ENCODE measurements at regions of chr10 and their contacts with region 1.

Region 1: GRCh38 chr10:119341459-119342301 is 134.3 kb downstream of the GRK5 start:
- DNase-seq: peak; percentile 73 to 84
- ATAC-seq: peak; percentile 77 to 90 (median 84)
- H3K4me3 ChIP-seq: no peak overlapping the region
- H3K27ac ChIP-seq: peak overlapping the region; percentile 50 to 84 (median 70)
- H3K4me1 ChIP-seq: peaks cover 23 to 87% (median 49%) of the 10 kb centered on the region in 9 donors
- H3K27me3 ChIP-seq: no peaks in the 10 kb centered on the region
- CTCF ChIP-seq: no peak

Region 2: DNA sequence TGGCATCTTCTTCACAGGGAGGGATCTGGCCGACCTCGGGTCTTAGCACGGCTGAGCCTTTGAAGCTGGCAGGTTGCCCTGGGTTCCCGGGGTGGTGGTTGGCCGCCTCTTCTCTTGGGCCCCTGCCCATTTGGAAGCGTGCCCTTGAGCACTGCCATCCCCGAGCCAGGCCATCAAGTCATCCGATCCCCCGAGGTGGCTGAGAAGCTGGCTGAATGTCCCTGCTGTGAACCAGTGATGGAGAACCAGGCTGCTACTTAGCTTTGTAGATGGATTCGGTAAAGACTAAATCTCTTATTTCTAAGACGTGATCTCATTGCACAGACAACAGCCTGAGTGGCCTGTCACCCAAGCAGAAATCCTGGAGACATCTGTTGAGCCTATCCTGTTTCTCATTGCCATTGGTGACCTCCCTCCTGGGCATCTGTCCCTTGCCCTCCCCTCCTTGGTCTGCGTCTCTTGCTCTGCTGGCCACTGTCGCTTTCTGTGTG is 60.1 kb before region 1 on chr10:
- intact Hi-C with region 1: loop called in 2 of 10 experiments (anchors 5 kb)
- DNase-seq: peak; percentile 88 to 91
- ATAC-seq: peak; percentile 32 to 84 (median 67)
- H3K4me3 ChIP-seq: no peak overlapping the region
- H3K27ac ChIP-seq: peak overlapping the region; percentile 18 to 70 (median 58)
- H3K4me1 ChIP-seq: peaks cover 48 to 99% (median 73%) of the 10 kb centered on the region in 9 donors
- H3K27me3 ChIP-seq: no peaks in the 10 kb centered on the region
- CTCF ChIP-seq: no peak

Region 3: DNA sequence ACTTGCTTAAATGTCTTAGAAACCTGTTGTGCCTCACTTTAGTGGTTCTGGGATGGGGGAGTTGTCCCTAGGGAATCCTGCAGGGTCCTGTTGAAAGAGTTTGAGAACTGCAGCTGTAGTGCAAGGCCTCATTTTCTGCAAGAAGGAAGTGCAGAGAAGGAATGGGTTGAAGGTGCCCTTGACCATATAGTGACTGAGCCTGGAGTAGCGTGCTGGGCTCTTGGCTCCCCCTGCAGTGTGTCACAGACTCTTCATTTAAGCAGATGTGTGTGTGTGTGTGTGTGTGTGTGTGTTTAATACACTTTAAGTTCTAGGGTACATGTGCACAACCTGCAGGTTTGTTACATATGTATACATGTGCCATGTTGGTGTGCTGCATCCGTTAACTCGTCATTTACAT is 42.1 kb before region 1 on chr10:
- intact Hi-C with region 1: loop called in 1 of 10 experiments (anchors 5 kb)
- DNase-seq: no peak
- ATAC-seq: no peak
- H3K4me3 ChIP-seq: no peak overlapping the region
- H3K27ac ChIP-seq: peak overlapping the region in 2 of 10 donors; percentile 4 to 54
- H3K4me1 ChIP-seq: peaks cover 21 to 80% (median 52%) of the 10 kb centered on the region in 9 donors
- H3K27me3 ChIP-seq: no peaks in the 10 kb centered on the region
- CTCF ChIP-seq: peak in 1 of 9 donors; percentile 28

Region 4: GRCh38 chr10:119421887-119422681 is 80.4 kb after region 1 on chr10:
- intact Hi-C with region 1: loop called in 1 of 10 experiments (anchors 5 kb)
- DNase-seq: peak in 1 of 2 donors; percentile 56
- ATAC-seq: peak in 6 of 8 donors; percentile 31 to 64 (median 38)
- H3K4me3 ChIP-seq: no peak overlapping the region
- H3K27ac ChIP-seq: peak overlapping the region in 9 of 10 donors; percentile 37 to 74 (median 68)
- H3K4me1 ChIP-seq: peaks cover 3 to 34% (median 18%) of the 10 kb centered on the region in 9 donors
- H3K27me3 ChIP-seq: no peaks in the 10 kb centered on the region
- CTCF ChIP-seq: no peak